Body of pancreas (tissue), 4 donors: ENCODE measurements at regions of chr9 and their contacts with region 1.

Region 1: GRCh38 chr9:70924895-70925547 is 196.4 kb downstream of the TRPM3 start:
- DNase-seq: peak; percentile 32 to 71 (median 56)
- ATAC-seq: peak; percentile 88
- H3K4me3 ChIP-seq: no peak overlapping the region
- H3K27ac ChIP-seq: no peak overlapping the region
- H3K4me1 ChIP-seq: peaks cover 8% of the 10 kb centered on the region
- H3K27me3 ChIP-seq: no peaks in the 10 kb centered on the region
- CTCF ChIP-seq: peak; percentile 51 to 84 (median 77)
- POLR2A ChIP-seq: no peak

Region 2: DNA sequence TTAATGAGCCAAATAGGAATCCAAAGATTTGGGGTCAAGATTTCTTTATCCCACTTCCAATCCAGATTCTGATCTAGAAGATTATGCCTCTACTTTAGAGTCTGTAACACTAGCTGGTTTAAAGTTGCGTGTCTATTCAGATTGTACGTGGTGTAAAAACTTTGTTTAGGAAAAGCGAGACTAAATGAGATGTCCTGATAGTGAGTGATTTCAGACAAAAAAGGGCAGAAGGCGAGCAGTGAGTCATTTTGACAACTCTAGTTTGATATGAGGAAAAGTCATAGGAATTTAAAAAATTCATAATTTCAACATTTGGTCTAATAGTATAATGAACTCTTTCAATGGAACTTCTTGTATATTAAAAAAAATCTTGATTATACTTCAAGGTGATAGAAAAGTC is 391.0 kb before region 1 on chr9:
- intact Hi-C with region 1: no loop called
- DNase-seq: no peak
- ATAC-seq: no peak
- H3K4me3 ChIP-seq: no peak overlapping the region
- H3K27ac ChIP-seq: no peak overlapping the region
- H3K4me1 ChIP-seq: no peaks in the 10 kb centered on the region
- H3K27me3 ChIP-seq: no peaks in the 10 kb centered on the region
- CTCF ChIP-seq: no peak
- POLR2A ChIP-seq: no peak

Region 3: GRCh38 chr9:70861376-70861775 is 63.6 kb before region 1 on chr9:
- intact Hi-C with region 1: no loop called
- DNase-seq: no peak
- ATAC-seq: no peak
- H3K4me3 ChIP-seq: no peak overlapping the region
- H3K27ac ChIP-seq: no peak overlapping the region
- H3K4me1 ChIP-seq: no peaks in the 10 kb centered on the region
- H3K27me3 ChIP-seq: no peaks in the 10 kb centered on the region
- CTCF ChIP-seq: no peak
- POLR2A ChIP-seq: no peak

Region 4: DNA sequence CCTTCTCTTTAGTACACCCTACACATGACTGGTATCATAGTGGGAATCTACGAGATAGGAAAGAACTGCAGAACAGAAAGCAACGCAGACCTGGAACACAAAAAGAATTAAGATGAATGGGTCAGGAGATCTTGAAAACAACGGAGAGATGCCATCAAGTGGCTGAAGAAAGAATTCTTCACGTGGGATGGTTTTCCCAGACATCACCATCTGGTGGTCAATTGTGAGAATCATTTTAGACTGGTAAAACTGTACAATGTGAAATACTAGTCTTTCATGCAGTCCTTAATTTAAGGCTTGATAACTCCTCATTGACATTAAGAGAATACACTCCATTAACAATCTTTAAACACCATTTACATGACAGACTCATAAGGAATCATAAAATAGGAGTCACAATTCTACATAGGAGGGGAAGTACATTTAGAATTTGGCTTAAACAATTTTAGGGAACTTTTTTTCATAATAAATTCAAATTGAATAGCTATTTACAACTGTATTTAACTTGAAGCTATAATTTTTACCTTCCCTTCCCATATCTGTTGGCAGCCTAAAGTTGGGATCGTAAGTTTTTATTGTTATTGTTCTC is 324.8 kb after region 1 on chr9:
- intact Hi-C with region 1: loop called (anchors 5 kb)
- DNase-seq: peak in 2 of 4 donors; percentile 15 to 40
- ATAC-seq: peak; percentile 79
- H3K4me3 ChIP-seq: no peak overlapping the region
- H3K27ac ChIP-seq: no peak overlapping the region
- H3K4me1 ChIP-seq: no peaks in the 10 kb centered on the region
- H3K27me3 ChIP-seq: no peaks in the 10 kb centered on the region
- CTCF ChIP-seq: peak; percentile 11 to 88 (median 76)
- POLR2A ChIP-seq: no peak